ENCODE measurements at regions of chr6 and their contacts with region 1.

Region 1: DNA sequence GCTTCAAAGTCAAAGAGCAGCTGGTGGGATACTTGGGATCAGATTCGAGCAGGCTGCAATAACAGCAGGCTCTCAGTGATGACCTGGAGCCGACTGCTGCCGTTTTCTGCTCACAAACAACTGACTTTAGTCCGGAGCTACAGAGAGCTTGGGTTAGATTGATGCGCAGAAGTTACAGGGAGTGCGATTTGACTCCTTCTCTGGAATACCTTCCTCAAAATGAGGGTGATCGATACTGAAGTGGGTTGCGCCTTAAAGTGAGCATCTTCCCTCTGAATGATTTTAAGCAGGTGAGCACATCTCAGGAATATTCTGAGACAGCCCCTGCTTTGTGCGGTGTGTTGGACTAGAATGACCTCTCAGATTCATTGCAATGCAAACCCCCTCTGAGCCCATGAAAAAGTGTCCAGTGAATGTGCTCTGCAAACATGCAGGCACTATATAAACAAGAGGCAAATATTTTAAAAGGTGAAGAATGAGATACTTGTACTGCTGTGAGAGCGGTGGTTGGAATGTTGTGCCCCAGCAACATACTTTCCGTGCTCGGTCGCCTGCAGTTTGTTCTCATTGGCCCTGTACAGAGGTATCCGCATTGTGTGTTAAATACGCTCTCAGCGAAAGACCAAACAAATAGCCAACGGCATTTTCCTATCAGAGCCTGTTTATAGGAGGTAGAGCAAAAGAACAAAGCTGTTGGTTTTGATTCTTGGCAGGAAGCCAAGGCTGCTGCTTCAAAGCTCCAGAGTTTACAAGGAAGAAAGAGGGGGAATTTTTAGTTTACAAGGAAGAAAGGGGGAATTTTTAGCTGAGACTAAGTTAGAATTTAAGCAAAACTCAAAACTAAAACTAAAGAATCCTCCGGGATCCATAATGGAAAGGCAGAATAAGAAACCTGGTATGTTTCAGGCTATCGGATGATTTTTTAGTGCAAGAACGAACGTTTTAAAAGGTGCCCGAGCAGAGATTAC is 67.7 kb downstream of the PHACTR2 start:
- DNase-seq: peak; percentile 81 to 89
- H3K4me3 ChIP-seq: peak overlapping the region; percentile 21
- H3K4me3 Mint-ChIP-seq: peak overlapping the region; percentile 69
- H3K27ac Mint-ChIP-seq: peak overlapping the region; percentile 95
- H3K4me1 ChIP-seq: peaks cover 62% of the 10 kb centered on the region
- H3K4me1 Mint-ChIP-seq: peaks cover 50% of the 10 kb centered on the region
- H3K27me3 ChIP-seq: no peaks in the 10 kb centered on the region
- H3K27me3 Mint-ChIP-seq: no peaks in the 10 kb centered on the region
- CTCF ChIP-seq: no peak

Region 2: DNA sequence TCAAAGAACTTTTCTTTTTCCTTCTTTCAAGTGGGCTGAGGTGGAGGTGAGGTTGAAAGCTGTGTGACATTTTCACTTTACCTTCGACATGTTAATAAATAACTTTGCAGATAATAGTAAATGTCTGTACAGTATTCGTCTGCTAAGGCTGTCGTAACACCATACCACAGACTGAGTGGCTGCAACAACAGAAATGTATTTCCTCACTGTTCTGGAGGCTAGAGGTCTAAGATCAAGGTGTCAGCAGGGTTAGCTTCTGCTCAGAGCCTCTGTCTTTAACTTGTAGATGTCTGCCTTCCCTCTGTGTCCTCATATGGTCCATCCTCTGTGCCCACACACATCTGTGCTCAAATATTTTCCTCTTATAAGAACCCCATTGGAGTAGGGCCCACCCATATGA is 52.8 kb before region 1 on chr6:
- CTCF ChIA-PET with region 1: no interaction called
- POLR2A ChIA-PET with region 1: no interaction called
- intact Hi-C with region 1: loop called (anchors 1 kb)
- DNase-seq: peak; percentile 61 to 65
- H3K4me3 ChIP-seq: no peak overlapping the region
- H3K4me3 Mint-ChIP-seq: no peak overlapping the region
- H3K27ac Mint-ChIP-seq: no peak overlapping the region
- H3K4me1 ChIP-seq: peaks cover 66% of the 10 kb centered on the region
- H3K4me1 Mint-ChIP-seq: peaks cover 45% of the 10 kb centered on the region
- H3K27me3 ChIP-seq: no peaks in the 10 kb centered on the region
- H3K27me3 Mint-ChIP-seq: no peaks in the 10 kb centered on the region
- CTCF ChIP-seq: no peak

Region 3: GRCh38 chr6:143842902-143843676 is 97.6 kb after region 1 on chr6 and contains the start of gene LTV1:
- CTCF ChIA-PET with region 1: no interaction called
- POLR2A ChIA-PET with region 1: interaction called, 5 read pairs
- intact Hi-C with region 1: loop called (anchors 1 kb)
- DNase-seq: peak; percentile 96
- H3K4me3 ChIP-seq: peak within 1 kb of the TSS; percentile 78
- H3K4me3 Mint-ChIP-seq: peak within 1 kb of the TSS; percentile 92
- H3K27ac Mint-ChIP-seq: peak within 1 kb of the TSS; percentile 94
- H3K4me1 ChIP-seq: peaks cover 7% of the 10 kb centered on the region; the same call in 1 of the 2 replicates
- H3K4me1 Mint-ChIP-seq: peaks cover 7% of the 10 kb centered on the region
- H3K27me3 ChIP-seq: no peaks in the 10 kb centered on the region
- H3K27me3 Mint-ChIP-seq: no peaks in the 10 kb centered on the region
- CTCF ChIP-seq: no peak
- total RNA-seq, gene LTV1: 36.2 and 38.1 TPM in 2 replicates

Region 4: GRCh38 chr6:143867236-143867635 is 121.8 kb after region 1 on chr6:
- CTCF ChIA-PET with region 1: no interaction called
- POLR2A ChIA-PET with region 1: no interaction called
- intact Hi-C with region 1: no loop called
- DNase-seq: no peak
- H3K4me3 ChIP-seq: no peak overlapping the region
- H3K4me3 Mint-ChIP-seq: no peak overlapping the region
- H3K27ac Mint-ChIP-seq: no peak overlapping the region
- H3K4me1 ChIP-seq: no peaks in the 10 kb centered on the region
- H3K4me1 Mint-ChIP-seq: no peaks in the 10 kb centered on the region
- H3K27me3 ChIP-seq: no peaks in the 10 kb centered on the region
- H3K27me3 Mint-ChIP-seq: no peaks in the 10 kb centered on the region
- CTCF ChIP-seq: no peak